ENCODE measurements at regions of chr22 and their contacts with region 1.

Region 1: DNA sequence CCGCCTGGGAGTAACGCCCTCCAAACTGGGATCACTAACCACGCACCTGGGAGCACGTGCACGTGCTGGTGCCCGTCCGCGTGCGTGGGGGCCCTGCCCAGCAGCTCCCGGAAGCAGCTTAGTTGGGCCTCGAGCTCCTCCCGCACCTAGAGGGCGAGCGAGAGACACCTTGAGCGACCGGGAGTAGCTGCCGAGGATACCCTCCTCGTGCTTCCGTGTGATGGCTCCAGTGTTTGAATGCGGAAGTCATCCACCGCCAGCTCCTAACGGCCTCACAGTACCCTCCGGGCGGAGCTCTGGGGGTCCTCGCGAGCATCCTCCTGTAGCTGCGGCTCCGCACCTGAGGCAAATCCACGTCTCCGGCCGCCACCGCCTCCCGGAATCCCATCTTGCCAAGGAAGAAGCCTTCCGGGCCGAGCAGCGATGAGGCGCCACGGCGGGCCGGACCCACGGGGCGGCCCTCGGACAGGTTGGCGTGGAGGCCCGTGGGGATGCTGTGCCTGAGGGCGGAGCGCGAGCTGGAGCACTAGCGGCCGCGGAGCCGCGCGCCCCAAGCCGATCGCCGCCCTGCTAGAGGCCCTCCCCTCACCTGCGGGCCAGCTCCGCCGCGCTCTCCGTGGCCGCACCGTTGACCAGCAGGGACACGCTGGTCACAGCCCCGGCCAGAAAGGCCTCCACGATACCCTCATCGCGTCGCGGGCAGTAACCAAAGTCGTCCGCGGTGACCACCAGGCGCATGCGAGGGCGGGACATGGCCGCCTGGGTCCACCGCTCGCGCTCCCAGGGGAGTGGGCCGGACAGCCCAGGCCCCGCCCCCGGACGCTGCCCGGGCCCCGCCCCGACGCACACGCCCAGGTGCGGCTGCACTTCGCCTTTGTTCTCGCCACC is at the start of gene YDJC:
- DNase-seq: peak; percentile 85 to 98 (median 91)
- ATAC-seq: peak; percentile 88 to 91 (median 88)
- H3K4me3 ChIP-seq: peak within 1 kb of the TSS; percentile 75 to 99
- H3K4me3 Mint-ChIP-seq: peak within 1 kb of the TSS; percentile 87 to 91 (median 91)
- H3K27ac ChIP-seq: peak within 1 kb of the TSS; percentile 89
- H3K27ac Mint-ChIP-seq: peak within 1 kb of the TSS; percentile 86 to 92
- H3K4me1 ChIP-seq: peaks cover 7 to 60% of the 10 kb centered on the region in 2 experiments
- H3K4me1 Mint-ChIP-seq: peaks cover 40 to 53% (median 41%) of the 10 kb centered on the region in 3 donors
- H3K27me3 ChIP-seq: no peaks in the 10 kb centered on the region
- H3K27me3 Mint-ChIP-seq: no peaks in the 10 kb centered on the region
- total RNA-seq, gene YDJC: 28.3 to 69.2 (median 62.2) TPM

Region 2: GRCh38 chr22:21641789-21642583 is 12.5 kb after region 1 on chr22 and contains the start of gene SDF2L1:
- CTCF ChIA-PET with region 1: interaction called, 6 to 51 read pairs
- POLR2A ChIA-PET with region 1: interaction called in 1 of 2 experiments, 9 read pairs
- DNase-seq: peak; percentile 96 to 99 (median 97)
- ATAC-seq: peak; percentile 96 to 98 (median 96)
- H3K4me3 ChIP-seq: peak within 1 kb of the TSS; percentile 56 to 87
- H3K4me3 Mint-ChIP-seq: peak within 1 kb of the TSS; percentile 77 to 88 (median 83)
- H3K27ac ChIP-seq: peak within 1 kb of the TSS; percentile 52
- H3K27ac Mint-ChIP-seq: peak within 1 kb of the TSS; percentile 74 to 90
- H3K4me1 ChIP-seq: peaks cover 7 to 34% of the 10 kb centered on the region in 2 experiments
- H3K4me1 Mint-ChIP-seq: peaks cover 28 to 34% (median 32%) of the 10 kb centered on the region in 3 donors
- H3K27me3 ChIP-seq: peaks cover 0 to 5% of the 10 kb centered on the region in 2 experiments
- H3K27me3 Mint-ChIP-seq: no peaks in the 10 kb centered on the region
- total RNA-seq, gene SDF2L1: 22.1 to 55.4 (median 50.2) TPM